Pancreas (tissue), 10 donors: ENCODE measurements at regions of chr1 and their contacts with region 1.

Region 1: GRCh38 chr1:161989108-161989507 is 34.6 kb downstream of the OLFML2B start:
- DNase-seq: no peak
- ATAC-seq: no peak
- H3K4me3 ChIP-seq: no peak overlapping the region
- H3K27ac ChIP-seq: no peak overlapping the region
- H3K4me1 ChIP-seq: no peaks in the 10 kb centered on the region
- H3K27me3 ChIP-seq: no peaks in the 10 kb centered on the region
- CTCF ChIP-seq: no peak

Region 2: DNA sequence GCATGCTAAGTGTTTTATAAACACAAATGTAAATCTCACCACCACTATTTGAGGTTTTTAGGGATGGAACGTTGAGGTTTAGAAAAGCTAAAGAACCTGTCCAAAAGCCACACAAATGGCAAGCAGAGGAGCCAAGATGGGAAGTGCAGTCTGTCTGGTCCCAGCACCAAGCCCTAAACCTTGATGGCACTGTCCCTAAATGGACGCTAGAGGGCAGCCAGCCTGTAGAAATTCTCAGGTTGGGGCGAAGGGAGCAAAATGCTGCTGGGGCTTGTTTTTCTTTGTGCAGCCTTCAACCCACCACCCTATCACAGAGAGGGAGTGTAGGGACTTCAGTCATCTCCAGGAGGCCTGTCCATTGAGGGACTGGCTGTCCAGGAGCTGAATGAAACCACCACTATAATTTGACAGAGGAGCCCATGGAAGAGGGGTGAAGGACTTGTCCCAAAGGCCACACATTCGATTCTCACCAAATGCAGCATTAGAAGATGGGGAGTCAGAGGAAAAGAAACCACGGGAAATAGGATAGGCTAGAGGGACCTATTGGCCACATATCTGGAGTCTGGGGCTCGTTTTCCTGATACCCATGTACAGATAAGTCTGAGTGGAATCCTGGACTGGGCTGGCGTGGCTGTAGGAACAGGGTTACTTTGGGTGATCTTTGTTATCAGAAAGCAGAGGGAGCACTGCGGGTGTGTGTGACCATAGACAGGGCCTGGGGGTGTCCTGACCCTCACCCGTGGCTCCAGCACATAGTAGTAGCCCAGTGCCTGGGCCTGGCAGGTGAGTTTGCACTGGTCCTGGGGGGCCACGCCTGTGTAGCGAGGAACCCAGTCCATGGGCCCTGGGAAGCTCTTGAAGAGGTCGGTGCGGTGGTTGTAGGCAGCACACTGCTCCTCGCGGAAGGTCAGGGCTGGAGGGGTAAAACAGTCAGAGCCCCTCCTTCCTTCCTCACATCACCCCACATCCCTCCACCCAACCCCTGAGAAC is 796.3 kb before region 1 on chr1:
- intact Hi-C with region 1: no loop called
- DNase-seq: peak in 3 of 6 donors; percentile 41 to 66 (median 57)
- ATAC-seq: peak; percentile 73 to 89 (median 82)
- H3K4me3 ChIP-seq: no peak overlapping the region
- H3K27ac ChIP-seq: no peak overlapping the region
- H3K4me1 ChIP-seq: no peaks in the 10 kb centered on the region
- H3K27me3 ChIP-seq: no peaks in the 10 kb centered on the region
- CTCF ChIP-seq: peak; percentile 61 to 88 (median 76)

Region 3: GRCh38 chr1:161935264-161935663 is 53.8 kb before region 1 on chr1:
- intact Hi-C with region 1: loop called in 1 of 3 experiments (anchors 5 kb)
- DNase-seq: no peak
- ATAC-seq: no peak
- H3K4me3 ChIP-seq: no peak overlapping the region
- H3K27ac ChIP-seq: no peak overlapping the region
- H3K4me1 ChIP-seq: no peaks in the 10 kb centered on the region
- H3K27me3 ChIP-seq: no peaks in the 10 kb centered on the region
- CTCF ChIP-seq: no peak

Region 4: DNA sequence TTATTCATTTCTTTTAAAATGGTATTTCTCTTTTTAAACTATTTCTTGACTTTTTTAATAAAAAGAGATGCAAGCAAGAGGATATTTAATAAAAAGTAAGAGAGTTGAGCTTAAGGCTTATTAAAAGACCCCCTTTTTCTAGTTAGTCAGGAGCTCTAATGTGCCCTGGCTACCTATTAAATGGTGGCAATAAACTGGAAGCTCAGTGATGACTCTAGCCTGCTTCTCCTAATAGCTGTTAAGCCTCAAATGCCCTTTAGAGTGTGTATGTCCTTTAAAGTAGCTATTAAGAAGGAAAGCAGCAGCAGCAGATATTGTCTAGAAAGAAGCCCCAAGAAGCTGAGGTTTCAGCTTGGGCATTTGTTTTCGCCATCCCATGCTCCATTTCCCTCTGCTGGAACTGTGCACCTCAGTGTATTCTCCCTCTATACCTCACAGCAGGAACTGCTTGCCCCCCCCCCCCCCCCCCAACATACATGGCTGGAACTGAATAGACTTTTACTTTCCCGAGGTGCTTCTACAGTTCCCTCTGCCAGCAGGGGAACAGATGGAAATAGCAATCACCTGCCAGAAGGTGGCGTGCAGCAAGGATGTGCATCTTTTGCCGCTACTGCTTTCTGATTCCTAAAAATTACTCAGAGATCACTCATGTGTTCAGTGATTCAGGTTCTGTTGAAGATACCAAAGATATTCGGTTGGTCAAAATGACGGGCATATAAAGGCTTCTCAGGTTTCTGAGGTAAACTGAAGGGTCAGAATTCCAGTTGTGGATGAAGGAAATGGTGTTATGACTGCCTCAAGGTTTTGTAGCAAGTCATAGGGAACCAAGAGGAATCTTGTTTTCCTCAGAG is 1082.5 kb after region 1 on chr1:
- intact Hi-C with region 1: no loop called
- DNase-seq: peak in 5 of 6 donors; percentile 18 to 63 (median 33)
- ATAC-seq: peak in 3 of 4 donors; percentile 60 to 80 (median 74)
- H3K4me3 ChIP-seq: no peak overlapping the region
- H3K27ac ChIP-seq: no peak overlapping the region
- H3K4me1 ChIP-seq: no peaks in the 10 kb centered on the region
- H3K27me3 ChIP-seq: peaks cover 0 to 5% (median 0%) of the 10 kb centered on the region in 4 donors
- CTCF ChIP-seq: peak; percentile 27 to 45 (median 40)